ENCODE measurements at regions of chr16 and their contacts with region 1.

Region 1: GRCh38 chr16:3282730-3283524 is at the start of gene ZNF263:
- DNase-seq: peak; percentile 96
- ATAC-seq: peak; percentile 91
- H3K4me3 Mint-ChIP-seq: peak within 1 kb of the TSS; percentile 90
- H3K27ac Mint-ChIP-seq: peak within 1 kb of the TSS; percentile 97
- H3K4me1 Mint-ChIP-seq: peaks cover 24% of the 10 kb centered on the region
- H3K27me3 Mint-ChIP-seq: no peaks in the 10 kb centered on the region
- total RNA-seq, gene ZNF263: 19.2 to 19.6 TPM

Region 2: GRCh38 chr16:2739625-2740435 is 543.1 kb before region 1 on chr16:
- CTCF ChIA-PET with region 1: no interaction called
- POLR2A ChIA-PET with region 1: no interaction called
- intact Hi-C with region 1: no loop called
- DNase-seq: no peak
- ATAC-seq: no peak
- H3K4me3 Mint-ChIP-seq: no peak overlapping the region
- H3K27ac Mint-ChIP-seq: no peak overlapping the region
- H3K4me1 Mint-ChIP-seq: no peaks in the 10 kb centered on the region
- H3K27me3 Mint-ChIP-seq: peaks cover 1% of the 10 kb centered on the region

Region 3: DNA sequence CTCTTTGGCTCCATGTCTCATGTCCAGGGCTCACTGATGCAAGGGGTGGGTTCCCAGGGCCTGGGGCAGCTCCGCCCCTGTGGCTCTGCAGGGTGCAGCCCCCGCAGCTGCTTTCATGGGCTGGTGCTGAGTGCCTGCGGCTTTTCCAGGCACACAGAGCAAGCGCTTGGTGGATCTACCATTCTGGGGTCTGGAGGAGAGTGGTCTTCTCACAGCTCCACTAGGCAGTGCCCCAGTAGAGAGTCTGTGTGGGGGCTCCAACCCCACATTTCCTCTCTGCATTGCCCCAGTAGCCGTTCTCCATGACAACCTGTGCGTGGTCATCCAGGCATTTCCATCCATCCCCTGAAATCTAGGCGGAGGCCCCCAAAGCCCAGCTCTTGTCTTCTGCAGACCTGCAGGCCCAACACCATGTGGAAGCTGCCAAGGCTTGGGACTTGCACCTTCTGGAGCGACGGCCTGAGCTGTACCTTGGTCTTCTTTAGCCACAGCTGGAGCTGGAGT is 212.3 kb before region 1 on chr16:
- CTCF ChIA-PET with region 1: no interaction called
- POLR2A ChIA-PET with region 1: no interaction called
- intact Hi-C with region 1: no loop called
- DNase-seq: peak; percentile 74
- ATAC-seq: peak; percentile 5
- H3K4me3 Mint-ChIP-seq: peak overlapping the region; percentile 64
- H3K27ac Mint-ChIP-seq: peak overlapping the region; percentile 97
- H3K4me1 Mint-ChIP-seq: peaks cover 68% of the 10 kb centered on the region
- H3K27me3 Mint-ChIP-seq: no peaks in the 10 kb centered on the region

Region 4: GRCh38 chr16:3099732-3100499 is 183.0 kb before region 1 on chr16:
- CTCF ChIA-PET with region 1: no interaction called
- POLR2A ChIA-PET with region 1: no interaction called
- intact Hi-C with region 1: loop called in 1 of 2 experiments (anchors 2 kb)
- DNase-seq: peak; percentile 99
- ATAC-seq: peak; percentile 84
- H3K4me3 Mint-ChIP-seq: peak overlapping the region; percentile 68
- H3K27ac Mint-ChIP-seq: peak overlapping the region; percentile 84
- H3K4me1 Mint-ChIP-seq: peaks cover 49% of the 10 kb centered on the region
- H3K27me3 Mint-ChIP-seq: no peaks in the 10 kb centered on the region

Region 5: DNA sequence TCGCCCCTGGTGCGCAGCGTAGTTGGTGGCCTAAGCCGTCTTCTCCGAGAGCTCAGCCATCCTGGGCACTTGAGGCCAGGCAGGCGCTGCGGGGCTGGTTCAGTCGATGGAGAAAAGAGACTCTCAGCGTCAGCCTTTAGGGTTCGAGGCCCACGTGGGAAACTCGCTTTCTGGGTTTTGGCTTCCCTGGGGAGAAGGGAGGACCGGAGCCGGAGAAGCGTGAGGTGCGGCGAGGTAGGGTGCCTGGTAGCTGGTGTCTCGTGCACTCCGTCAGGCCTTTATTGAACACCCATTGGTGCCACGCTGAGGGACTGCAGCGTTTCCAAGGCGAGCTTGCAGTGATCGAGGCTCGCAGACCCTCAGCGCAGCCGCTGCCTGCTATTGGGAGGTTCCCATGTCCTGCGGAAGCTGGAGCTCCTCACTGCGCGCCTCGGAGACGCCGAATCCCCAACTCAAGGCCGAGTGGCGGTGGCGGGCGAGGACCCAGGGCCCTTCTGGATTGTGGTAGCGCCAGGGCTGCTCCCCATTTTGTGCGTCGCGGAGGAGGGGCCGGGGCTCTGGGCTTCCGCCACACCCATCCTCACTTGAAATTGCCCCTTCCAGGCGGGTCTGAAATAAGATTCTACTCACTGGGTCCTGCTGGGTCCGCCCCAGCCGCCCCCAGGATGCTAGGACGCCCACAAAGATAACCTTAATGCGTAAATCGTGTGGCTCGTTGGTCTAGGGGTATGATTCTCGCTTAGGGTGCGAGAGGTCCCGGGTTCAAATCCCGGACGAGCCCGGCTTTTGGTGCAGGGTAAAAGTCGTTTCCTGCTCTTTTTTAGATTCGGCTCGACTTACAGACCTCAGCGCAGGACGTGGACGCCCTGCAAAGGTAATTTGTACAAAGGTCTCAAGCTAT is 93.8 kb before region 1 on chr16:
- CTCF ChIA-PET with region 1: no interaction called
- POLR2A ChIA-PET with region 1: no interaction called
- intact Hi-C with region 1: loop called in 1 of 2 experiments (anchors 1 kb)
- DNase-seq: peak; percentile 78
- ATAC-seq: peak; percentile 42
- H3K4me3 Mint-ChIP-seq: peak overlapping the region; percentile 69
- H3K27ac Mint-ChIP-seq: peak overlapping the region; percentile 72
- H3K4me1 Mint-ChIP-seq: peaks cover 46% of the 10 kb centered on the region
- H3K27me3 Mint-ChIP-seq: peaks cover 66% of the 10 kb centered on the region

Region 6: GRCh38 chr16:3264137-3265036 is 18.5 kb before region 1 on chr16:
- CTCF ChIA-PET with region 1: interaction called, 21 read pairs
- POLR2A ChIA-PET with region 1: no interaction called
- intact Hi-C with region 1: loop called (anchors 1 kb)
- DNase-seq: peak; percentile 99
- ATAC-seq: peak; percentile 95
- H3K4me3 Mint-ChIP-seq: peak overlapping the region; percentile 83
- H3K27ac Mint-ChIP-seq: peak overlapping the region; percentile 90
- H3K4me1 Mint-ChIP-seq: peaks cover 25% of the 10 kb centered on the region
- H3K27me3 Mint-ChIP-seq: no peaks in the 10 kb centered on the region

Region 7: GRCh38 chr16:3400779-3401688 is 118.1 kb after region 1 on chr16 and contains the starts of genes ZNF174 and ZSCAN32:
- CTCF ChIA-PET with region 1: no interaction called
- POLR2A ChIA-PET with region 1: interaction called, 4 read pairs
- intact Hi-C with region 1: loop called (anchors 1 kb)
- DNase-seq: peak; percentile 99
- ATAC-seq: peak; percentile 99
- H3K4me3 Mint-ChIP-seq: peak within 1 kb of the TSS; percentile 91
- H3K27ac Mint-ChIP-seq: peak within 1 kb of the TSS; percentile 83
- H3K4me1 Mint-ChIP-seq: peaks cover 49% of the 10 kb centered on the region
- H3K27me3 Mint-ChIP-seq: no peaks in the 10 kb centered on the region
- total RNA-seq, gene ZNF174: 7.4 to 9.5 TPM
- total RNA-seq, gene ZSCAN32: 15.7 to 17.4 TPM

Region 8: GRCh38 chr16:3503523-3503922 is 220.6 kb after region 1 on chr16:
- CTCF ChIA-PET with region 1: no interaction called
- POLR2A ChIA-PET with region 1: no interaction called
- intact Hi-C with region 1: loop called (anchors 2 kb)
- DNase-seq: peak; percentile 77
- ATAC-seq: peak; percentile 60
- H3K4me3 Mint-ChIP-seq: peak overlapping the region; percentile 65
- H3K27ac Mint-ChIP-seq: peak overlapping the region; percentile 91
- H3K4me1 Mint-ChIP-seq: peaks cover 62% of the 10 kb centered on the region
- H3K27me3 Mint-ChIP-seq: no peaks in the 10 kb centered on the region